ENCODE measurements at regions of chr2 and their contacts with region 1.

Region 1: DNA sequence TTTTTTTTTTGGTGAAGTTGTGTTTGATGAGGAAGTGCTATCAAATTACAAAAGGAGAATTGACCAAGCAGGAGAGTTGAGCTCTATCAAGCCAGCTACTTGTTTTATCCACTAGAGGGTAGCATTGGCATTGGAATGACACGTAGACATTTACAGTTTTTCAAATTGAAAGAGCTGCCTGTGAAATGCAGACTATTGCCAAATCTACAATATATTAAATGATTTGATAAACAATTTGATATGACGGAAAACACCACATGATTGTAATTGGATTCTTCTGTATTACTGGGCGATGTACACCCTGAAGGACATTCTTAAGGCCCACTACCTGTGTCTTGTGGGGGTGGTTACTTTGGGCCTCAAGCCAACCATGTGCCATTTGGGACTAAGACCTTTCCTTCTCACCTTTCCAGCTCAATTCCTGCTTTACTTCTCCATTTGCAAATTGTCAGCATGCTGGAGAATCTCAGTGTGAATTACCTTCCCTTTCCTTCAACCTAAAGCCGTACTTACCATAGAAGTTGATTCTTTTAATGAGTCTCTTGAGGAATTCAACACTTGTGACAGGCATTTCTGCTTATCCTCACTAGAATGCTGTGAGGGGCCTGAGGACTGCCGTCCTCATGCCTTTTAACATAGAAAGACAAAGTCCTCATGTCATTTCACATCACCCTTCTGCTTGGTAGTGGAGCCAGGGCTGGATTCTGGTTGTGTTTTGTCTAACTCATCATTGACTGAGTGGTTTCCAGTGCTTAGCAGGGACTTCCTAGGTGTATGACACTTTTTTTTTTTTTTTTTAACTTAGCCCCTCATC is 134.8 kb upstream of the THUMPD2 start:
- DNase-seq: peak; percentile 28
- H3K4me3 Mint-ChIP-seq: no peak overlapping the region
- H3K27ac Mint-ChIP-seq: no peak overlapping the region
- H3K4me1 Mint-ChIP-seq: no peaks in the 10 kb centered on the region
- H3K27me3 Mint-ChIP-seq: peaks cover 21% of the 10 kb centered on the region
- CTCF ChIP-seq: peak; percentile 47

Region 2: DNA sequence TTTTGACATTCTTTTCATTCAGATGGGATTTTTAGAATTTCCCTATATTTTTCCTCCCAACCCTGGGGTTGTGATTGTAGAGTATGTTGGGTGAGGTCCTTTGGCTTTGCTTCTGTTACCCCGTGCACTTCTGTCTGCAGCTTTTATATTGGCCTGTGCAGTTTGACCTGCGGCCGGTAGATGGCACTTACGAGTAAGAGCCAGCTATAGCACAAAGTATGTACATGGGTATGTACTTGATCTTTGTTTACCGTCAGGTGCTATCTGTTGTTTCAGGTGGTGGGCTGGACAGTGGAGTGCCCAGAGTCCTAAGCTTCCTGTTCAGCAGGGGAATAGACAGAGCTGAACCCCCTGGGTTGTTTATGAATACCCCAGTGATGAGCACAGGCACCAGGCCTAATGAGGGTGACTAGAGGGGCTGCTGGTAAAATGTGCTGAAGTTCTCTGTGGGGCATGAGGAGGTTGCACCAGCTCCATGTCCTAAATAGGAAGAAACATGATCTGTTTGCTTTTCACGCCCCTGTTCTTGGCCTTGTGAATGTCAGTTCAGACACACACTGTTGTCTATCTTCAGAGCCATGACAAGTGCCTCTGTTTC is 75.9 kb before region 1 on chr2:
- CTCF ChIA-PET with region 1: interaction called, 9 read pairs
- intact Hi-C with region 1: loop called (anchors 1 kb)
- DNase-seq: peak; percentile 55
- H3K4me3 Mint-ChIP-seq: no peak overlapping the region
- H3K27ac Mint-ChIP-seq: no peak overlapping the region
- H3K4me1 Mint-ChIP-seq: no peaks in the 10 kb centered on the region
- H3K27me3 Mint-ChIP-seq: no peaks in the 10 kb centered on the region
- CTCF ChIP-seq: peak; percentile 90

Region 3: DNA sequence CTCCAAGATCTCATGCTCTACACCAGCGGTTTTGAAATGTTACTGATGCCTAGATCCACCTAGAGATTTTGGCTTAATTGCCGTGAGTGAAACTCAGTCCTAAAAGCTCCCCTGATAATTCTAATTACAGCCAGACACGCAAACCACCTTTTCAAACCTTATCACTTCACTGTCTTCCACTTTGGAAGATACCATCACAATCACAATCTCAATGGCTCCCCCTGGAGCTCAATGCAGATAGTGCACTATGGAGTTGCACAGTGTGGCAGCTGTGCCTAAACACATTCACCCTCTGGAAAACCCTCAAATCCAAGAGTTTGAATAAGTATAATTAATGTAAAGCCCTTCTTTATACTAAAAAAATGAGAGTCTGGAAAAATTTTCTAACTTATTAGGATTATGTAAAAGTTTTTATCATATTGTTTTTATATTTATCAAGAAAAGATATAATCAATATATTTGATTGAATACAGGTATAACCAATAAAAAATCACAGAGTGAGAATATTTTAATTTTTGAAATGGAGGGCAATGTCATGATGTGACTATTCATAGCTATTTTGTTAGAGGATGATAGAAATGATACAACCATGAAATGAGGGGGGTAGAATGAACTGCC is 640.9 kb after region 1 on chr2:
- CTCF ChIA-PET with region 1: interaction called, 22 read pairs
- intact Hi-C with region 1: loop called (anchors 1 kb)
- DNase-seq: peak; percentile 77
- H3K4me3 Mint-ChIP-seq: no peak overlapping the region
- H3K27ac Mint-ChIP-seq: no peak overlapping the region
- H3K4me1 Mint-ChIP-seq: no peaks in the 10 kb centered on the region
- H3K27me3 Mint-ChIP-seq: no peaks in the 10 kb centered on the region
- CTCF ChIP-seq: peak; percentile 69

Region 4: GRCh38 chr2:41400088-41400665 is 1486.3 kb after region 1 on chr2:
- CTCF ChIA-PET with region 1: interaction called, 5 read pairs
- intact Hi-C with region 1: loop called (anchors 5 kb)
- DNase-seq: peak; percentile 41
- H3K4me3 Mint-ChIP-seq: no peak overlapping the region
- H3K27ac Mint-ChIP-seq: no peak overlapping the region
- H3K4me1 Mint-ChIP-seq: no peaks in the 10 kb centered on the region
- H3K27me3 Mint-ChIP-seq: no peaks in the 10 kb centered on the region
- CTCF ChIP-seq: peak; percentile 28

Region 5: DNA sequence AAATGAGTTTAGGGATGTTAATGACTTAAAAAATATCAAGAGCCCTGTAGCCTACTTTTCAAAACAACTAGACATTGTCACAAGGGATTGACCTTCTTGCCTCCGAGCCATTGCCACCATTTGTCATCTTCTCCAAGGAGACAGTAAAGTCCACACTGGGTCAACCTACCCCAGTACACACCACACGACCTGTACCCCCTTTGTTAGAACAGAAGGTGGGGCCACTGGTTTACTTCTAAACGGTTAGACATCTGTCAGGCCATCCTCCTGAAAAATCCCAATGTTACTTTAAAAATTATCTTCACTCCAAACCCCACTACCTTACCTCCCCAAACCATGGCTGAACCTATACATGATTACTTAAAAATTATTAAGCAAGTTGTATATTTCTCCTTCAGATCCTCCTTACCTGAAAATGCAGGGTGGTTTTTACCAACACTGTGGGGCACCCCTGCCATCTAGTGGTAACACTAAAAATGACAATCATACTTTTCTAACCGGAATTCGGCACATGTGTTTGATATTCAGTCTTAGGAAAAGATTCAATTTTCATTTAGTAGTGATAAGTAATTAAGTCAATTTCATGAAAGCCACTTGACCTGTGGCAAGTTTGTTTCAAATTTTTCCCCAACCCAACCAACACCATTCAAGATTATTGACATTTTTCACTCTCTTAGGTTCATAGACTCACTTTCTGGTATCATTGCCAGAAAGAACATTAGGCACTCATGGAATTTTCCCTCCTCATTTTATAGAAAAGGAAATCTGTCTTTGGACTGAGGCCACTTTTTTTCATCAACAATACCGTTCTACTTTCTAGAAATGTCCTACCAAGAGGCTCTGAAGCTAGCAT is 1868.7 kb after region 1 on chr2:
- CTCF ChIA-PET with region 1: interaction called, 5 read pairs
- intact Hi-C with region 1: loop called (anchors 10 kb)
- DNase-seq: peak; percentile 46
- H3K4me3 Mint-ChIP-seq: no peak overlapping the region
- H3K27ac Mint-ChIP-seq: no peak overlapping the region
- H3K4me1 Mint-ChIP-seq: peaks cover 8% of the 10 kb centered on the region
- H3K27me3 Mint-ChIP-seq: peaks cover 30% of the 10 kb centered on the region
- CTCF ChIP-seq: peak; percentile 46

Measured in Calu3 (cell line).